A549 (cell line): ENCODE measurements at regions of chr3 and their contacts with region 1.

Region 1: DNA sequence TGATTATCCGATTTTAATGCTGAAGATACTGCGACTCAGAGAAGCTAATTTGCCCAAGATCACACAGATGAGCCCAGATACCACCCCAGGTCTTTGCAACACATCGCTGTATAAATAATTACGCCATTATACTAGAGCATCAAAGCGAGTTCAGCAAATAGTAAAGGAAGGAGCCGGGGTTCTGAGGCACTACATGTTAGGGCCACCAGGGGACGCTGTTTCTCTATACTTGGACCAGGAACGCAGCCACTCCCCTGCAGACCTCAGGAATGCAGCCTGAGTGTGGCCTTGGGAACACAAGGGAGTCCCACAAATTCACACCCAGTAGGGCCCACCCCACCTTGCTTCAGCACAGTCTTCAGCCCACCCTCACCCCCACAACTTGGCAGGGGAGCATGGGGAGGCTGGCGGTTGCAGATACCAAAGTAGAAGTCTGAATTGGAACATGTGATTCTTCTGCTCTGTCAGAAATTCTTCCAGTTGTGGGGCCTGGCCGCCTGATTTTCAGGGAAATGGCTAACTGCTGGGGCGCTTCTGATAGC is 57.8 kb upstream of the RYK start:
- DNase-seq: peak; percentile 69 to 83
- ATAC-seq: peak; percentile 77 to 78
- H3K4me3 ChIP-seq: no peak overlapping the region
- H3K27ac ChIP-seq: peak overlapping the region; percentile 97 to 100
- H3K4me1 ChIP-seq: peaks cover 53% of the 10 kb centered on the region
- CTCF ChIP-seq: peak; percentile 92
- EP300 ChIP-seq: 0 out of 5 replicates have a peak, but pooled peaks of 1 of the 2 experiments have one; percentile 15
- POLR2A ChIP-seq: no peak
- RAD21 ChIP-seq: peak; percentile 99

Region 2: DNA sequence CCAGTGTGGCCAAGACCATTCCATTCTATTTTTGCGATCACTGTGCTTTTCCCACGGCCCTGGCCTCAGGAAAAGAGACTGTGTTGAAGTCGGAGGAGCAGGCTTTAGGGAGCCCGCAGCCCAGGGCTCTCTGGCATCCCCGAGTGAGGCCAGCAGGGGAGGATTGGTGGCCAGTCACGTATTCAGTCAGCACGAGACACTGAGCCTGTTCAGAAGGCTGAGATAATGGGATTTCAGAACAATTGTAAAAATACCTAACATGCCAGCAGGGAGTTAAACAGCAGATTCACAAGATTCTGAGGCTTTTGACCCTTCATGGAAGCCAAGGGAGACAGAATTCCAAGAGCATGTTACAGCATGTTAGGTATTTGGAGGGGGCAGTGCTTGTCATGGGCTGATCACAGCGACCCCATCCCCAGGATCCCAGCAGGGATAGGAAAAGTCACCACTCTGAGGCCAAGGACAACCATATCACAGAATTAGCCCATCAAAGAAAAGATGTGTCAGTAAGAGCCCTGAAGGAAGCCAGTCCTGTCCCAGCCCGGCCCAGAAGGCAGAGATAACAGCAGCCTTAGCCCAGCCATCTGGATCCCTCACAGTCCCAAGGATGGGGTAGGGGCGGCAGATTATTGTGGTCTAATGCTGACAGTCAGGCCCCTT is 25.2 kb after region 1 on chr3:
- CTCF ChIA-PET with region 1: interaction called, 12 read pairs
- POLR2A ChIA-PET with region 1: interaction called, 23 read pairs
- DNase-seq: peak in 1 of 2 experiments; percentile 52
- ATAC-seq: peak; percentile 47 to 67; a peak in 5 of 6 replicates
- H3K4me3 ChIP-seq: no peak overlapping the region
- H3K27ac ChIP-seq: peak overlapping the region; percentile 96 to 100
- H3K4me1 ChIP-seq: peaks cover 88% of the 10 kb centered on the region
- CTCF ChIP-seq: no peak
- EP300 ChIP-seq: no peak; a peak in 1 of 5 replicates
- POLR2A ChIP-seq: no peak
- RAD21 ChIP-seq: no peak

Region 3: DNA sequence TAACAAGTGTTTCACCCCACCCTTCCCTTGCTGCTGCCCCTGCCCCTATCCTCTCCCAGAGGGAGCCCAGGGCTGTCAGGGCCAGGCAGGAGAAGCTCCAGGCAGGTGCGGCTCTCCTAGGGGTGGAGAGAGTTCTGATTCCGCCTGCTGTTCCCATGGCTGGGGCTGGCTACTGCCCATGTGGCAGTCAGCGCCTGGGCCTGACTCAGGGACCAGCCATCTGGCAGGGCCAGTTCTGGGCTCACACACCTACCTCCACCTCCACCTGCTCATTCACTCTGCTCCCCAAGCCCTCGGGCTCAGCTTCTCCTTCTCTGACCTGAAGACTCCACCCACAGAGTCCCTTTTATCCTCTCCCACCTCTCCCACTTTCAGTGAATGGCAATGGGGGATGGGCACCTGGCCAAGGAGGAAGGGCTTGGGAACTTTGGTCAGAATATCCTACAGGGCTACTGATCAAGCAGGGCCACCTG is 42.5 kb after region 1 on chr3:
- CTCF ChIA-PET with region 1: interaction called, 356 read pairs
- POLR2A ChIA-PET with region 1: interaction called, 38 read pairs
- DNase-seq: no peak
- ATAC-seq: peak in 1 of 2 experiments; percentile 2; a peak in 2 of 6 replicates
- H3K4me3 ChIP-seq: no peak overlapping the region
- H3K27ac ChIP-seq: peak overlapping the region; percentile 87 to 100
- H3K4me1 ChIP-seq: peaks cover 51% of the 10 kb centered on the region
- CTCF ChIP-seq: no peak
- EP300 ChIP-seq: no peak
- POLR2A ChIP-seq: no peak
- RAD21 ChIP-seq: no peak

Region 4: DNA sequence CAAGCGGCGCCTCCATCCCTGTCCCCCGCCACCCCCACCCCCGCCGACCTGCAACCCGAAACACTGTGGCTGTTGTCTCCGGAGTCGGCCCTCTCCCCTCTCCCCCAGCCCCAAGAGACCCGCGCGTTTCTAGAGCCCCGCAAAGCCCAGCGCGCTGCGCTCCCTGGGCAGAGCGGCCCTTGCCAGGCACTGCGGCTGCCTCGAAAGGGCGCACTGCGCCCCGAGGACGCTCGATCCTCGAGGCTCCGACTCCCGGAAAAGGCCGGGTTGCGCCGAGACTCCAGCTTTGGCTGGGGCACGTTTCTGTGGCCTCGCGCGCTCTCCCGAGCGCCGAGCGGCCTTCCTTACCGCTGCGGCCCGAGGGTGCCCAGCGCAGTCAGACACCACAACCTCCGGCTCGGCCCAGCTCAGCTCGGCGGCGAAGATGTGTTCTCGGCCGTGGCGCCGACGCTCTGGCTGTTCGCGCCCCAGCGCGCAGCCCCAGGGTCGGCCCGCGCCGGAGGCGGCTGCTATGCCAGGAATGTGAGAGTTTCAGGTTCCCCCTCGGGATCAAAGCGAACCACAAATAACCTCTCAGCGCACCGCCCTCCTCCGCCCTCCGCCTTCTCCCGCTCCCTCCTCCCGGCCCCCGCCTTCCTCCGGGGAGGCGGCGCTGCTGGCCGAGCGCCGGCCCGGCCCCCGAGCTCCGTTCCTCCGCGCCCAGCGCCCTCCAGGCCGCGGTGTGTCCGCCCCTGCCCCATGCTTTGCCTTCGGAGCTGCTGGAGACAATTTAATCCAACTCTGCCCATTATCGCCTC is 65.8 kb after region 1 on chr3 and contains the start of gene AMOTL2:
- CTCF ChIA-PET with region 1: interaction called, 356 read pairs
- POLR2A ChIA-PET with region 1: interaction called, 13 read pairs
- DNase-seq: peak; percentile 90 to 93
- ATAC-seq: peak; percentile 79 to 80
- H3K4me3 ChIP-seq: peak within 1 kb of the TSS; percentile 74
- H3K27ac ChIP-seq: peak within 1 kb of the TSS; percentile 99 to 100
- H3K4me1 ChIP-seq: peaks cover 67% of the 10 kb centered on the region
- CTCF ChIP-seq: no peak
- EP300 ChIP-seq: peak in 1 of 2 experiments; percentile 63; a peak in 1 of 5 replicates
- POLR2A ChIP-seq: peak; percentile 63
- RAD21 ChIP-seq: no peak
- polyA plus RNA-seq, gene AMOTL2: 36.3 and 44.1 TPM in 2 replicates

Region 5: GRCh38 chr3:134852893-134853351 is 544.5 kb after region 1 on chr3:
- CTCF ChIA-PET with region 1: no interaction called
- POLR2A ChIA-PET with region 1: no interaction called
- DNase-seq: no peak
- ATAC-seq: no peak
- H3K4me3 ChIP-seq: no peak overlapping the region
- H3K27ac ChIP-seq: no peak overlapping the region
- H3K4me1 ChIP-seq: no peaks in the 10 kb centered on the region
- CTCF ChIP-seq: no peak
- EP300 ChIP-seq: no peak
- POLR2A ChIP-seq: no peak
- RAD21 ChIP-seq: no peak